Activated CD4-positive, alpha-beta T cell treated with anti-CD3 and anti-CD28 coated beads for 36 hours (primary cell): ENCODE measurements at regions of chr6 and their contacts with region 1.

Region 1: GRCh38 chr6:20919677-20920385 is 385.6 kb downstream of the CDKAL1 start:
- DNase-seq: peak; percentile 35
- ATAC-seq: peak; percentile 94
- H3K4me3 Mint-ChIP-seq: no peak overlapping the region
- H3K27ac Mint-ChIP-seq: peak overlapping the region; percentile 49
- H3K4me1 Mint-ChIP-seq: peaks cover 23% of the 10 kb centered on the region
- H3K27me3 Mint-ChIP-seq: no peaks in the 10 kb centered on the region

Region 2: GRCh38 chr6:20542927-20543602 is 376.8 kb before region 1 on chr6:
- CTCF ChIA-PET with region 1: no interaction called
- POLR2A ChIA-PET with region 1: no interaction called
- intact Hi-C with region 1: loop called in 1 of 2 experiments (anchors 2 kb)
- DNase-seq: peak; percentile 53
- ATAC-seq: peak; percentile 97
- H3K4me3 Mint-ChIP-seq: peak overlapping the region; percentile 11
- H3K27ac Mint-ChIP-seq: peak overlapping the region; percentile 69
- H3K4me1 Mint-ChIP-seq: peaks cover 45% of the 10 kb centered on the region
- H3K27me3 Mint-ChIP-seq: no peaks in the 10 kb centered on the region

Region 3: DNA sequence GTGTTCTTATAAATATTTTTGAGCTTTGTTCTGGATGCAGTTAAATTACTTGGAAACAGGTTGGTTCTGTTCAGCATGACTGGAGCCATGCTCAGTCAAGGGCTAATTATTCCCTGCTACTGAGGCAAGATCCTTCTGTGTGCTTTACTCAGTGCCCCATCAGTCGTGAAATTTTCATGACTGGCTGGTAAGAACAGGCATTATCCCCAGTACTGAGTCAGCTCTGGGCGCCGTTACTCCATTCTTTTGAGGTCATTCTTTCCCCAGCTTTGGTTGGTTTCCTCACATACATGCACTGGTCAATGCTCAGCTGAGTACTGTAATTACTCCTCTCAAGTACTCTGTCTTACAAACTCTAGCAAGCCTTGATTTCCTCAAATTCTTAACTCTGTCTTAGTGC is 314.2 kb before region 1 on chr6:
- CTCF ChIA-PET with region 1: no interaction called
- POLR2A ChIA-PET with region 1: no interaction called
- intact Hi-C with region 1: loop called in 1 of 2 experiments (anchors 10 kb)
- DNase-seq: no peak
- ATAC-seq: no peak
- H3K4me3 Mint-ChIP-seq: no peak overlapping the region
- H3K27ac Mint-ChIP-seq: no peak overlapping the region
- H3K4me1 Mint-ChIP-seq: peaks cover 2% of the 10 kb centered on the region
- H3K27me3 Mint-ChIP-seq: no peaks in the 10 kb centered on the region

Region 4: GRCh38 chr6:20877008-20877937 is 42.6 kb before region 1 on chr6:
- CTCF ChIA-PET with region 1: no interaction called
- POLR2A ChIA-PET with region 1: interaction called, 7 read pairs
- intact Hi-C with region 1: loop called (anchors 1 kb)
- DNase-seq: peak; percentile 62
- ATAC-seq: peak; percentile 98
- H3K4me3 Mint-ChIP-seq: no peak overlapping the region
- H3K27ac Mint-ChIP-seq: peak overlapping the region; percentile 74
- H3K4me1 Mint-ChIP-seq: peaks cover 14% of the 10 kb centered on the region
- H3K27me3 Mint-ChIP-seq: no peaks in the 10 kb centered on the region

Region 5: DNA sequence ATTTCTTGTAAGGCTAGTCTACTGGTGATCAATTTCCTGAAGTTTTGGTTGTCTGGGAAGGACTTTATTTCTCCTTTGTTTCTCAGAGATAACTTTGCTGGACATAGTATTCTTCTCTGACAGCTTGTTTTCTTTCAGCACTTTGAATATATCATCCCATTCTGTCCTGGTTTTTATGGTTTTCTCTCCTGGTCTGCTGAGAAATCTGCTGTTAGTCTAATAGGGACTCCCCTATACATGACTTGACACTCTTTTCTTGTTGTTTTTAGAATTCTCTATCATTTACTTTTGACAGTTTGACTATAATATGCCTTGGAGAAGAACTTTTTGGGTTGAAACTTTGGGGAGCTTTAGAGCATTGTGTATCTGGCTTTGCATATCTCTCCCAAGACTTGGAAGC is 1264.5 kb after region 1 on chr6:
- CTCF ChIA-PET with region 1: no interaction called
- POLR2A ChIA-PET with region 1: no interaction called
- intact Hi-C with region 1: no loop called
- DNase-seq: no peak
- ATAC-seq: no peak
- H3K4me3 Mint-ChIP-seq: no peak overlapping the region
- H3K27ac Mint-ChIP-seq: no peak overlapping the region
- H3K4me1 Mint-ChIP-seq: no peaks in the 10 kb centered on the region
- H3K27me3 Mint-ChIP-seq: no peaks in the 10 kb centered on the region